HEK293T (cell line): ENCODE measurements at regions of chr17 and their contacts with region 1.

Region 1: GRCh38 chr17:75904749-75905521 is at the start of gene MRPL38:
- DNase-seq: peak; percentile 99

Region 2: DNA sequence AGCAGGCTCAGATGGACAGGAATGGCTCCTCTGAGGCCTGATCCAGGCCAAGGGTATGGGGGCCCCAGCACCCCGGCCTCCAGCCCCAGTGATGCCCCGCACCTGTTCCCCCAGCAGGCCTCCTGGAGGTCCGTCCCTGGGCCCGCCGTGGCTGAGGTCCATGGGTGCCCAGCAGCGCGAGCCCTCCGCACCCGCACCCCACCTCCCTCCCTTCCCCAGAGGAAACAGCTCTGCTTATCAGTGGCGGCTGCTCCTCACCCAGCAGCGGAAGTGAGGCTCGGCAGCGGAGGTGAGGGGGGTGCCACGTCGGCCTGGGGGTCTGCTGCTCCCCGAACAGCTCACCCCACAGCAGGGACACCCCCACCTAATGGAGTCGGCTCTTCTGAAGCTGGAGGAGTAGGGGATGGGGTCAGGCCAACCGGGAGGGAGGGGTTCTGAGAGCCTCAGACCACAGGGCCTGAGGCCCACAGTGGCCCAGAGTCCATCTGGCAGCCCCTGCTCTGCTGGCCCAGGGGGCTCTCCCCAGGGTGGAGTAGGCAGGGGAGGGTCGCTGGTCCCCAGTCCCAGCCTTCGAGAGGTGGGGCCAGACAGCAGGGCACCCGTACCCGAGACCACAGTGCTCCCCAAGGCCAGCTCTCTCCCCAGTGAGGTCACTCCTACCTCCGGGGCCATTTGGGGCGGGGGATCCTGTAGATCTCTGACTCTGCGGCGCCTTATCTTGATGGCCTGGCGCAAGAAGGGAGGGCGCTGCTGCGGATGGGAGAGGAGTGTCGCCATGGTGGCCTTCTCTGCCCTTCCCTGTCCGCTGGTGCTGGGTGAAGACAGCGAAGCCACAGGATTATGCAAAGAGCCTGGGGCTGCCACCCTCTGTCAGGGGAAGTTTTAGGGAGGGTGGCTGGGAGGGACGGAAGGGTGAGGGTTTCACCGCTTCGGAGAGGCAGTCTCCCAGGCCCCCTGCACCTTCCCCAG is 61.1 kb before region 1 on chr17 and contains the start of gene UNC13D:
- CTCF ChIA-PET with region 1: no interaction called
- POLR2A ChIA-PET with region 1: no interaction called
- DNase-seq: no peak

Region 3: GRCh38 chr17:75940724-75941441 is 35.9 kb after region 1 on chr17 and contains the start of gene FBF1:
- CTCF ChIA-PET with region 1: interaction called, 3 read pairs
- POLR2A ChIA-PET with region 1: interaction called, 13 read pairs
- DNase-seq: peak; percentile 99

Region 4: GRCh38 chr17:76005263-76006149 is 100.6 kb after region 1 on chr17:
- CTCF ChIA-PET with region 1: interaction called, 22 read pairs
- POLR2A ChIA-PET with region 1: interaction called, 22 read pairs
- DNase-seq: peak; percentile 83